WTC11 (cell line): ENCODE measurements at regions of chr20 and their contacts with region 1.

Region 1: DNA sequence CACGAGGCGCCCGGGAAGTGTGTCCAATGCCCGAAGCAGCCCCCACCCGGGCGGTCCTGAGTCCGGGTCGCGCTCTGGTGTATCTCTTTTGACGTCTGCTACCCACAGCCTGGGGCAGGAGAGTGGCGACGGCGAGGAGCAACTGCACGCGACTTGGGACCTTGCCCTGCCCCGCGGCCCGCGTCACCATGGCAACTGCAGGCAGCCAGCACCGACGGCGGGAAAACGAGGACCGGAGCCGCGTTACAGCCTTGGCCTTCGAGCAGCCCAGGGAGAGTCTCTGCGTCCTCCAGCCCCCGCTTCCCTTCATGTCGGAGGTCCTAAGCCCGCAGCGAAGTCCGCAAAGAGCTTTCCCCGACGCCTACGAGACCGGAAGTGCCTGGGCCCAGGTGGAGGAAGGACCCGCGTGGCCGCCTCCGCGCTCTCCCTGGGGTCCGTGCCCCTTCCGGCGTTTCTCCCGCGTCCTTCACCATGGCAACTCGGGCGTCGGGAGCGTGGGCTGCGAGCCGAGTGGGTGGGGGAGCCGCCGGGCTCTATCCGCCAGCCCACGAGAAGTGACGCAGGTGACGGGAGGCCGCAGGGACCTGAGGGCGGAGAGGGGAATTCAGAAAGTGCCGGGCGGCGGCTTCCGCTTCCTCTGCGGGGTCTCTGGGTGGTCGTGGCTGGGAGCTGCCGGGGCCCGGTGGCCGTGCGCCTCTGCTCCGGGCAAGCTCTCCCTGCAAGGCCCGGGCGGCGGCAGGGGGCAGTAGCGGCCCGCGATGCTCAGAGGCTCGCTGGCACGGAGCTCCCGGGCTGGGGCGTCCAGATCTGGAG is 88.6 kb upstream of the TGM3 start:
- DNase-seq: peak; percentile 89
- ATAC-seq: peak; percentile 94
- H3K4me3 Mint-ChIP-seq: peak overlapping the region; percentile 76
- H3K27ac Mint-ChIP-seq: no peak overlapping the region
- H3K4me1 Mint-ChIP-seq: no peaks in the 10 kb centered on the region
- H3K27me3 Mint-ChIP-seq: peaks cover 42% of the 10 kb centered on the region
- CTCF ChIP-seq: peak; percentile 57

Region 2: GRCh38 chr20:2237059-2237458 is 29.9 kb after region 1 on chr20:
- CTCF ChIA-PET with region 1: interaction called, 31 read pairs
- POLR2A ChIA-PET with region 1: no interaction called
- DNase-seq: peak; percentile 18
- ATAC-seq: peak; percentile 32; the same call in 1 of the 2 replicates
- H3K4me3 Mint-ChIP-seq: no peak overlapping the region
- H3K27ac Mint-ChIP-seq: no peak overlapping the region
- H3K4me1 Mint-ChIP-seq: peaks cover 28% of the 10 kb centered on the region
- H3K27me3 Mint-ChIP-seq: no peaks in the 10 kb centered on the region
- CTCF ChIP-seq: no peak

Region 3: DNA sequence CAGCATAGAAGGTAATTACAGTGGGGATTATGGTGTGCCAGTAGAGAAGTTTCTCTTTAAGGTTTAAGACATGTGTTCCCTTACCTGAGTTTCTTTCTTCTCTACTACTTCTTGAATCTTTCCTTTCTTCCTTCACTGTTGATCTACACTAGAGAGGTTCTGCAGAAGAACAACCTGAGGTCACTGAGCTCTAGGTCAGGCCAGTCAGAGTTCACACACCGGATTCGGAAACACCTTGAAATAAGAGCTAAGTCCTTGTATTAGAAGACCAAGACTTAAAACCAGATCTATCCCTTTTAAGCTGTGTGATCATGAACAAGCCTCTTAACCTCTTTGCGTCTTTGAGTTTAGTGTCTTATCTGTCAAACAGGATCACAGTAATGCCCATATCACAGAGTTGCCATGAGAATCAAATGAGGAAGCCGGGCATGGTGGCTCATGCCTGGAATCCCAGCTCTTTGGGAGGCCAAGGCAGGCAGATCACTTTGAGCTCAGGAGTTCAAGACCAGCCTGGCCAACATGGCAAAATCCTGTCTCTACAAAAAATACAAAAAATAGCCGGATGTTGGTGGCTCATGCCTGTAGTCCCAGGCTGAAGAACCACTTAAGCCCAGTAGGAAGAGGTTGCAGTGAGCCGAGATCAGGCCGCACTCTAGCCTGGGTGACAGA is 66.6 kb after region 1 on chr20:
- CTCF ChIA-PET with region 1: interaction called, 12 read pairs
- POLR2A ChIA-PET with region 1: no interaction called
- DNase-seq: no peak
- ATAC-seq: no peak
- H3K4me3 Mint-ChIP-seq: no peak overlapping the region
- H3K27ac Mint-ChIP-seq: no peak overlapping the region
- H3K4me1 Mint-ChIP-seq: no peaks in the 10 kb centered on the region
- H3K27me3 Mint-ChIP-seq: no peaks in the 10 kb centered on the region
- CTCF ChIP-seq: no peak

Region 4: DNA sequence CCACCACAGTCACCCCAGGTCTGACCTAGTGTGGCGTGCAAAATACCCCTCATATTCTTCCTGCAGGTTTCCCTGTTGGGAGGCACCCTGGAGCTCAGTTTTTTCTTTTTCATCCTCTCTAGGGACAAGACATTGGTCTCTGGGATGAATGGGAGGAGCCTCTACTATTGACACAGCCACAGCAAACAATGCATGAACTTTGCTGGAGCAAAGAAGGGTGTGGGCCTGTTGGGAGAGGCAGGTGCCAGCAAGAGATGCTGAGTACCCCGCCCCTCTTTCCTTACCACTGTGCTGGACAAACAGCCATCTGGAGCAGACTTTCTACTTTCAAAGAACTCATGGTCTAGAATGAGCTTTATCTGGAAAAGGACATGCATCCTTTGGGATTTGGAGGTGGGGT is 98.8 kb after region 1 on chr20:
- CTCF ChIA-PET with region 1: interaction called, 18 read pairs
- POLR2A ChIA-PET with region 1: no interaction called
- DNase-seq: no peak
- ATAC-seq: peak; percentile 71
- H3K4me3 Mint-ChIP-seq: no peak overlapping the region
- H3K27ac Mint-ChIP-seq: no peak overlapping the region
- H3K4me1 Mint-ChIP-seq: peaks cover 5% of the 10 kb centered on the region
- H3K27me3 Mint-ChIP-seq: no peaks in the 10 kb centered on the region; the same call in 1 of the 2 replicates
- CTCF ChIP-seq: no peak

Region 5: GRCh38 chr20:2346188-2346737 is 139.1 kb after region 1 on chr20:
- CTCF ChIA-PET with region 1: interaction called, 35 read pairs
- POLR2A ChIA-PET with region 1: interaction called, 3 read pairs
- DNase-seq: no peak
- ATAC-seq: no peak
- H3K4me3 Mint-ChIP-seq: no peak overlapping the region
- H3K27ac Mint-ChIP-seq: no peak overlapping the region
- H3K4me1 Mint-ChIP-seq: no peaks in the 10 kb centered on the region
- H3K27me3 Mint-ChIP-seq: no peaks in the 10 kb centered on the region
- CTCF ChIP-seq: no peak

Region 6: GRCh38 chr20:2387180-2387577 is 180.0 kb after region 1 on chr20:
- CTCF ChIA-PET with region 1: interaction called, 20 read pairs
- POLR2A ChIA-PET with region 1: interaction called, 4 read pairs
- DNase-seq: peak; percentile 73
- ATAC-seq: peak; percentile 85
- H3K4me3 Mint-ChIP-seq: no peak overlapping the region
- H3K27ac Mint-ChIP-seq: no peak overlapping the region; the same call in 1 of the 2 replicates
- H3K4me1 Mint-ChIP-seq: no peaks in the 10 kb centered on the region
- H3K27me3 Mint-ChIP-seq: no peaks in the 10 kb centered on the region; the same call in 1 of the 2 replicates
- CTCF ChIP-seq: peak; percentile 50

Region 7: GRCh38 chr20:2421247-2421646 is 214.1 kb after region 1 on chr20:
- CTCF ChIA-PET with region 1: no interaction called
- POLR2A ChIA-PET with region 1: no interaction called
- DNase-seq: no peak
- ATAC-seq: no peak
- H3K4me3 Mint-ChIP-seq: no peak overlapping the region
- H3K27ac Mint-ChIP-seq: no peak overlapping the region
- H3K4me1 Mint-ChIP-seq: no peaks in the 10 kb centered on the region
- H3K27me3 Mint-ChIP-seq: no peaks in the 10 kb centered on the region
- CTCF ChIP-seq: no peak

Region 8: DNA sequence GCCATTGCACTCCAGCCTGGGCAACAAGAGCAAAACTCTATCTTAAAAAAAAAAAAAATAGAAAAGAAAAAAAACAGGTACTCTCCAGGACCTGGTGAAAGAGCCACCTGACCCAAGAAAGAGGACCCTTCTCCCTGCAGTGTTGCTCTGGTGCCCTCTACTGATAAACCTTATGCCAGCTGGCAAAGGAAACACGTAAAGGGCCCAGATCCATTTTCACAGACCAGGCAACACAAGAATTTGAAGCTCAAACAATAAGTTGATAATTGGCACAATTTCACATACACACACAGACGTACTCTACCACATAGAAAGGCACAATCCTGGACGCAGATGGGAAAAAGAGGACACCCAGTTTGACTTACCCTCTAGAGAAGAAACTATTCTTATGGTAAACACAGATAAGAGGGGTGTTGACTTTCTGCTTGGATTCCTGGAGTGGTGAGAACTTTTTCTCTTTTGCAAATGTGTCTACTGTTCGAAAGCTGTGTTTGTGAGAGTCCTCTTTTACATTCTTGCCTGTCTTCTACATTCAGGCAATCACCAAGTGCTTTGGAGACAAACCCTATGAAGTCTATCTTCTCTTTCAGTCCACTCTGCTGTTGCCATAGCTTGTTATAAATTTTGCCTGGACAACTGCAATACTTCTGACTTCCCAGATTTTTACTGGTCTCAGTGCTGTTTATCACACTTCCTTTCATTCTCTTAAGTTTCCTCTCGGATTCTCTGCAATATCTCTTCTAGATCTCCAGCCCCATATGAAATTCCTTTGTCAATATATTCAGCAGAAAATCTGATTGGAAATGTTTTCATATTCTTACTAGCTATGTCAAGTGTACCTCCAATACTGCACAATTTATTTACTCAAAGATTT is 269.8 kb after region 1 on chr20:
- CTCF ChIA-PET with region 1: interaction called, 11 read pairs
- POLR2A ChIA-PET with region 1: no interaction called
- DNase-seq: no peak
- ATAC-seq: peak; percentile 92
- H3K4me3 Mint-ChIP-seq: no peak overlapping the region
- H3K27ac Mint-ChIP-seq: 0 out of 2 replicates have a peak overlapping the region, but pooled peaks have one; percentile 2
- H3K4me1 Mint-ChIP-seq: peaks cover 23% of the 10 kb centered on the region
- H3K27me3 Mint-ChIP-seq: no peaks in the 10 kb centered on the region
- CTCF ChIP-seq: no peak